ENCODE measurements at regions of chr5 and their contacts with region 1.

Region 1: GRCh38 chr5:134577796-134578363 is 52.4 kb downstream of the JADE2 start:
- DNase-seq: peak; percentile 84
- ATAC-seq: peak; percentile 71
- H3K4me3 ChIP-seq: no peak overlapping the region
- H3K4me3 Mint-ChIP-seq: no peak overlapping the region
- H3K27ac ChIP-seq: peak overlapping the region in 1 of 2 donors; percentile 4
- H3K27ac Mint-ChIP-seq: peak overlapping the region; percentile 60
- H3K4me1 ChIP-seq: no peaks in the 10 kb centered on the region
- H3K4me1 Mint-ChIP-seq: peaks cover 4% of the 10 kb centered on the region
- H3K27me3 ChIP-seq: no peaks in the 10 kb centered on the region
- H3K27me3 Mint-ChIP-seq: no peaks in the 10 kb centered on the region
- CTCF ChIP-seq: peak; percentile 86

Region 2: GRCh38 chr5:134304311-134304710 is 273.6 kb before region 1 on chr5:
- CTCF ChIA-PET with region 1: interaction called, 15 read pairs
- POLR2A ChIA-PET with region 1: no interaction called
- intact Hi-C with region 1: loop called (anchors 2 kb)
- DNase-seq: no peak
- ATAC-seq: no peak
- H3K4me3 ChIP-seq: no peak overlapping the region
- H3K4me3 Mint-ChIP-seq: no peak overlapping the region
- H3K27ac ChIP-seq: no peak overlapping the region
- H3K27ac Mint-ChIP-seq: no peak overlapping the region
- H3K4me1 ChIP-seq: peaks cover 0 to 2% of the 10 kb centered on the region in 2 donors
- H3K4me1 Mint-ChIP-seq: no peaks in the 10 kb centered on the region
- H3K27me3 ChIP-seq: no peaks in the 10 kb centered on the region
- H3K27me3 Mint-ChIP-seq: no peaks in the 10 kb centered on the region
- CTCF ChIP-seq: no peak

Region 3: DNA sequence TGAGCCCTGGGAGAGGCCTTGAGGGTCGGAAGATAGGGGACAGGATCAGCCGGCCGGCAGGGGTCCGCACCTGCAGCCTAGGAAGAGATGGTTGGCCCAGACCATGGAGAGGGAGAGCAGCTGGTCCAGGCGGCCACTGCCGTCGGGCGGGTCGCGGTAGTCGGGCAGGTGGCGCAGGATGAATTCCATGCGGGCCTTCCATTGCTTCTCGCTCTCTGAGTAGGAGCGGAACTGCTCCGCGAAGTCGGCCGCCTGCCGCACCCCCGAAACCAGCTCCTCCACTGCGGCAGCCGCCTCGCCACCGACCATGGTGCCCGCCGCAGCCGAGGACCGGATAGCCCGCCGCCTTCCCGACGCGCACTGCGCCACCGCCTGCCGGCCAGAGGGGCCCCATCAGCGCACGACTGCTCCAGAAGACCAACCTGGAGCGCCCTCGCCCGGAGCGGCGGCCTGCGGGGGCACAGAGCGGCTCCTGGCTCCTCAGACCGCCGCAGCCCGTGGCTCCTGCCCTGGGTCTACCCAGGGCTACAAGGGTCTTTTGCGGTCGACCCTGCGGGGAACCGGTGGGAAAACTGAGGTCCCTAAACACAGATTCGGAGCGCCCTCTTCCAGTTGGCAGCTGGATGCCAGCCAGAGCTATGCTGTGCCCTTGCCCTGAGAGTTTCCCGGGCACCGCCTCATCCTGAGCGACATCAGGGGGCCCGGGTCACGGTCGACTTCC is 166.2 kb before region 1 on chr5 and contains the start of gene CDKN2AIPNL:
- CTCF ChIA-PET with region 1: interaction called, 27 read pairs
- POLR2A ChIA-PET with region 1: no interaction called
- intact Hi-C with region 1: loop called (anchors 1 kb)
- DNase-seq: peak; percentile 92
- ATAC-seq: peak; percentile 100
- H3K4me3 ChIP-seq: peak within 1 kb of the TSS; percentile 6 to 99 (median 87)
- H3K4me3 Mint-ChIP-seq: peak within 1 kb of the TSS; percentile 94
- H3K27ac ChIP-seq: peak within 1 kb of the TSS; percentile 64 to 68
- H3K27ac Mint-ChIP-seq: peak within 1 kb of the TSS; percentile 93
- H3K4me1 ChIP-seq: peaks cover 15 to 19% of the 10 kb centered on the region in 2 donors
- H3K4me1 Mint-ChIP-seq: peaks cover 39% of the 10 kb centered on the region
- H3K27me3 ChIP-seq: no peaks in the 10 kb centered on the region
- H3K27me3 Mint-ChIP-seq: no peaks in the 10 kb centered on the region
- CTCF ChIP-seq: peak; percentile 83
- total RNA-seq, gene CDKN2AIPNL: 15.8 and 17.2 TPM in 2 replicates

Region 4: DNA sequence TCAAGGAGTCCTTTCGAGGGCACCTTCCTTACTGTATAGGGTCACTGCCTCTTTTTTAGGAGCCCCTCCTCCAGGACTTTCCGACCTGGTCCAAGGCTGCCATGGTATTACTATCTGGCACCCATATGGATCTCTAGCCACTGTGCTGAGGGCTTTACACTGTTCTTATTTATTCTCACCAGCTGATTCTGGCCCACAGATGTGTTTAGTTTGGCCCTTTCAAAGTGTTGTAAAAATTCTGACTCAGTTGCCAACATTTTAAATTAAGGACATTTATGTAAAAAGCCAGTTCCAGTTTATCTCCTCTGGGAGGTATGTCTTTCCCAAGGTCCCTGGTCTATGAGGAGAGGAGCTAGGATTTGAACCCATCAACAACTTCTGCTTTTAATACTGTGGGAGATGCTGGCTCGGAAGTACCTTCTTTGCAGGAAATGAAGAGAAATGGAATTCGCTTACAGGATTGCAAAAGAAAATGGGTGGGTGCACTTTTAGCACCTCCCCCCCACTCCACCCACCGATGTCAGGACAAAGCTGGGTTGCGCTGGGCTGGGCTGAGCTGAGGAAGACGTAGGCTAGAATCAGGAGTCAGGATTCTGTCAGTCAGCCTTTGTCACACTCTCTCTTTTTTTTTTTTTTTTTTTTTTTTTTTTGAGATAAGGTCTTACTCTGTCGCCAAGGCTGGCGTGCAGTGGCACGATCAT is 44.6 kb before region 1 on chr5:
- CTCF ChIA-PET with region 1: interaction called, 30 read pairs
- POLR2A ChIA-PET with region 1: interaction called, 4 read pairs
- intact Hi-C with region 1: no loop called
- DNase-seq: no peak
- ATAC-seq: no peak
- H3K4me3 ChIP-seq: no peak overlapping the region
- H3K4me3 Mint-ChIP-seq: no peak overlapping the region
- H3K27ac ChIP-seq: peak overlapping the region in 1 of 2 donors; percentile 54
- H3K27ac Mint-ChIP-seq: peak overlapping the region; percentile 68
- H3K4me1 ChIP-seq: peaks cover 57 to 82% of the 10 kb centered on the region in 2 donors
- H3K4me1 Mint-ChIP-seq: peaks cover 92% of the 10 kb centered on the region
- H3K27me3 ChIP-seq: no peaks in the 10 kb centered on the region
- H3K27me3 Mint-ChIP-seq: no peaks in the 10 kb centered on the region
- CTCF ChIP-seq: no peak

Region 5: DNA sequence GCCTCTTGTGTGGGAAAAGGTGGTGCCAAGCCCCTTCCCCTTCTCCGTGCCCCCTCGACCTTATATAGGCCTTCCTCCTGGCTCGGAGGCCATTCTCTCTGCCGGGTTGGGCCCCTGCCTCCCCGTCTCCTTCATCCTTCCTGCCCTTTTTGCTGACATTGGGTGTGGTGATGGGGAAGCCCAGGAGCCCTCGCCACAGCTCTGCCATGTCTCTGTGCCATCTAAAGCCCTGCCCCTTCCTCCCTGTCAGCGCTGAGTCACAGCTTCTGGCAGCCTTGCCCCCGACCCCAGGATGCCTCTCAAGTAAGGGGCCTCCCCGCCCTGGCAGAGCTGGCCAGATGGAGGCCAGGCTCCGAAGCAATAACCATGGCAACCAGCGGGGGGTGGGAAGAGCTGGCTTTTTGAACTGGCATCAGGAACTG is 22.0 kb before region 1 on chr5:
- CTCF ChIA-PET with region 1: interaction called, 10 read pairs
- POLR2A ChIA-PET with region 1: interaction called, 3 read pairs
- intact Hi-C with region 1: no loop called
- DNase-seq: peak; percentile 83
- ATAC-seq: peak; percentile 64
- H3K4me3 ChIP-seq: peak overlapping the region in 1 of 5 experiments; percentile 32
- H3K4me3 Mint-ChIP-seq: peak overlapping the region; percentile 83
- H3K27ac ChIP-seq: peak overlapping the region; percentile 86 to 98
- H3K27ac Mint-ChIP-seq: peak overlapping the region; percentile 97
- H3K4me1 ChIP-seq: peaks cover 37 to 58% of the 10 kb centered on the region in 2 donors
- H3K4me1 Mint-ChIP-seq: peaks cover 62% of the 10 kb centered on the region
- H3K27me3 ChIP-seq: no peaks in the 10 kb centered on the region
- H3K27me3 Mint-ChIP-seq: no peaks in the 10 kb centered on the region
- CTCF ChIP-seq: no peak

Region 6: DNA sequence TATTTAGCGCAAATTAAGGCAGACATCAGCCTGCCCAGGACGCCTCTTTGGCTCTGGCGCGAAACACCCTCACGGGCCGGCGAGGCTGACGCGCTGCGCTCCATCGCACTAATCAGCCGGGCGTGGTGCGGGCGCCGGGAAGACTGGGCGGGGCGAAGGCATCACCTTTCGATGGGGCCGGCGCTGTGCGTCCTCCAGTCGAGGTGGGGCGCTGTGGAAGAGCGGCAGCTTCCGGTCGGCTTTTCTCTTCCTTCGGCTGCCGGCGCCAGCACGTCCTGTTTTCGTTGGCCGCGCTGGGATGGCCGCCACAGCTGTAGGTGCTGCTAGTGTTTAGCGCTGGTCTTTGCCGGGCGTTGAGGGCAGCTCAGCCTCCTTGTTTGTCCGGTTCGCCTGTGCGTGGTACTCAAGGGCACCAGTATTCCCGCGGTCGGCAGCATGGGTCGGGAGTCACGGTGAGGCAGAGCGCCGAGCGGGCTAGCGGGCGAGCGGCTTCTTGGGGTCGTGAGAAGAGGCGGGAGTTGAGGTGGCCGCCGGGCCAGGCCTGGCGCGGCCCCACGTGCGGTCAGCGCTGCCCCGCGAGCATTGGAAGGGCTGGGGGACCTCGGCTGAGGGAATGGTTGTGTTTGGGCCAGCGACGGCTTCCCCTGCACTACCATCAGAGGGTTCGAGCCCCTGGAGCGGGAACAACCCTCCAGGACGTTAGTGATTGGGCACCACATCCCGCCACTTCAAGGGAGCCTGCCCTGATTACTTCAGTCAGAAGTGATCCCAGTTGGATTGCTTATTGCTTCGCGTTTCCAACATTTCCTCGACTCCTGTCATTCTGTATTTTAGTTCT is 180.8 kb after region 1 on chr5 and contains the start of gene DDX46:
- CTCF ChIA-PET with region 1: no interaction called
- POLR2A ChIA-PET with region 1: no interaction called
- intact Hi-C with region 1: no loop called
- DNase-seq: peak; percentile 95
- ATAC-seq: peak; percentile 99
- H3K4me3 ChIP-seq: peak within 1 kb of the TSS; percentile 77 to 97 (median 86)
- H3K4me3 Mint-ChIP-seq: peak within 1 kb of the TSS; percentile 100
- H3K27ac ChIP-seq: peak within 1 kb of the TSS; percentile 54 to 80
- H3K27ac Mint-ChIP-seq: peak within 1 kb of the TSS; percentile 97
- H3K4me1 ChIP-seq: peaks cover 18 to 19% of the 10 kb centered on the region in 2 donors
- H3K4me1 Mint-ChIP-seq: peaks cover 36% of the 10 kb centered on the region
- H3K27me3 ChIP-seq: no peaks in the 10 kb centered on the region
- H3K27me3 Mint-ChIP-seq: no peaks in the 10 kb centered on the region
- CTCF ChIP-seq: peak; percentile 78
- total RNA-seq, gene DDX46: 75.7 and 80.9 TPM in 2 replicates